Activated CD4-positive, alpha-beta memory T cell treated with anti-CD3 and anti-CD28 coated beads for 36 hours (primary cell): ENCODE measurements at regions of chr10 and their contacts with region 1.

Region 1: DNA sequence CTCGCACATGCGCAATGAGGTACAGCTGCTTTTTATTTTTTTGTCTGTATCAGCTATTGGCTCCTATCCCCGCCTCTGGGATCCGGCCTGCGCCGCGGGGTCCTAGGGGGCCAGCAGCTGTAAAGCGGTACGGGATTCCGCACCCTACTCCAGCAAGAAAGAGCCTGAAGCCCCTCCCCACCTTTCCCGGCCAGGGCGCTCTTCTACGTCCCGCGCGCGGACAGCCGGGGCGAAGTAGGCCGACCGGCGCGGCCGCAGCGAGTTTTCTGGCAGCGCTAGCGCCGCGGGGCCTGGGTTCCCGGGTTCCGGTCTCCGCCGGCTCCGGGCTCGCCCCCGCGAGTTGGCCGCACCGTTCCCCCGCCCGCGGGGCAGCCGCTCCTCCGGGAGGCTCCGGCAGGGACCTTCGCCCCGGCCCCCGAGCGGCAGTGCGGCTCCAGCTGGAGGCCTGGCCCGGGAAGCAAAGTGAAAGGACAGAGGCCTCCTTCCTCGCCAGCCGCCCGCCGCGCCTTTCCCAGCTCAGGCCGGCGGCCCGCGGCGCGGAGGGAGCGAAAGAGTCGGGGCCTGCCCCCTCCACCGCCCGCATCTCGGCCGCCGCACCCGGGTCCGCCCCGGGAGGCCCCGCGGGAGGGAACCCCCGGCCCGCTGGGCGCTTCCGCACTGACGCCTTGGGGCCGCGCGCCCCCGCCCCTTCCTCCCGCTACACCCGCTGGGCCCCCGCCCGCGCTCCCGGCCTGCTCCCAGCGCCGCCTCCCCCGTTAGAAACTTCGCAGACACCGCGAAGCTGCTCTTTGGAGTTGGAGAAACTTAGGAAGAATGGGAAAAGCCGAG is 4.7 kb upstream of the SPAG6 start:
- DNase-seq: peak; percentile 70
- H3K4me3 Mint-ChIP-seq: peak overlapping the region; percentile 83
- H3K27ac Mint-ChIP-seq: peak overlapping the region; percentile 87
- H3K4me1 Mint-ChIP-seq: peaks cover 25% of the 10 kb centered on the region
- H3K27me3 Mint-ChIP-seq: peaks cover 60% of the 10 kb centered on the region

Region 2: GRCh38 chr10:22228943-22229801 is 111.4 kb before region 1 on chr10:
- CTCF ChIA-PET with region 1: no interaction called
- POLR2A ChIA-PET with region 1: interaction called, 10 read pairs
- intact Hi-C with region 1: no loop called
- DNase-seq: peak; percentile 90
- H3K4me3 Mint-ChIP-seq: peak overlapping the region; percentile 77
- H3K27ac Mint-ChIP-seq: peak overlapping the region; percentile 96
- H3K4me1 Mint-ChIP-seq: peaks cover 16% of the 10 kb centered on the region
- H3K27me3 Mint-ChIP-seq: peaks cover 4% of the 10 kb centered on the region

Region 3: DNA sequence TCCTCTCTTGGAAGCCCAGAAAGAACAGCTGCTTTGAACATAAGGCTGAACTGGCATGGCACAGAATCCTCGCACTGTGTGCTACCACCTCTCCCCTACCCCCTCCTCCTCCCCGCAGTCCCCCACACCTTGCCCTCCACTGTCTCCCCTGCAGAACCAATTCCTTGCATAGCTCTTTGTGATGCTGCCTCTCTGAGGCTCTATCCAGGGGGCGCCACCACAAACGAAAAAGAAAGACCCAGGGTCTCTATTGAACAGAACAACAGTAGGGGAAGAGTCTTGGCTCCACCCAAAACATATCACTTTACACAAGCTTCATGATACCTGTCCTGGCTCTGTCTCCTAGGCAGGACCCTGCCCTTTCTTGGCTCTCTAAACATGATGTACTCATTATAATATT is 96.6 kb before region 1 on chr10:
- CTCF ChIA-PET with region 1: no interaction called
- POLR2A ChIA-PET with region 1: no interaction called
- intact Hi-C with region 1: loop called (anchors 1 kb)
- DNase-seq: peak; percentile 17
- H3K4me3 Mint-ChIP-seq: no peak overlapping the region
- H3K27ac Mint-ChIP-seq: no peak overlapping the region
- H3K4me1 Mint-ChIP-seq: peaks cover 39% of the 10 kb centered on the region
- H3K27me3 Mint-ChIP-seq: peaks cover 4% of the 10 kb centered on the region

Region 4: DNA sequence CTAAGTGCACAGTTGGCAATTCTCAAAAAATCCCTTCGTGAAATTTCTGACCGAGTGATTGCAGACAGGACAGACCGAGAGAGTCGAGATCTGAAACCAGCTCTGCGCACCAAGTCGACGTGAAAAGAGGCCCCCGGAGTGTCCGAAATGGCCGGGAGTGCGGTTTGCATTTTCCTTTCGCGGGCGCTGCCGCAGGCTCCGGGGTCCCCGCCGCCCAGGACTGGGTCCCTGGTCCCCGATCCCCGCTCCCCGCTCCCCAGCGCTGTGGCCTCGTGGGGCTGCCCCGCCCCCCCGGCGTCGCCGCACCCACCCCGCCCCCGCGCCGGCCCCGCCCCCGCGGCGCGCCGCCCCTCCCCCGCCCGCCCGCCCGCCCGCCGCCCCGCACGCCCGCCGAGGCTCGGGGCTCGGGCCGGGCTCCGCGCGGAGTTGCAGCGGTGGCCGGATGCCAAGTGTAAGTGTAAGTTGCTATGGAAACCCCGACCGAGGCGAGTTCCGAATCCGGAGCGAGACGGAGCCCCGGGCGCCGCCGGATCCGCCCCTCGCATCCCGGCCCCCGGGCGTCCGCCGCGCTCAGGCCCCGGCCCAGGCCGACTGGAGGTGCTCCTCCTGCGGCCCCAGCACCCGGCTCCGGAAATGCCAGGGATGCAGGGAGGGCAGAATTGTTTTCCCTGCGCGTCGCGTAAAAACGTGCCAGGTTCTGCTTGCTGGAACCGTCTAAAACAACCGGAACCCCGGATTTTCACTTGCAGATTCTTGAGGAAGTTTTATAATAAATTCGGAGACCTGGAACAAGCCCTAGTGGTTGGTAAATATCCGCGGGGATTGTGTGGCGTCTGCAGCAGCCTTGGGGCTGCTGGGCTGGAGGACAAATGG is 15.1 kb before region 1 on chr10:
- CTCF ChIA-PET with region 1: no interaction called
- POLR2A ChIA-PET with region 1: interaction called, 9 read pairs
- intact Hi-C with region 1: loop called (anchors 2 kb)
- DNase-seq: peak; percentile 80
- H3K4me3 Mint-ChIP-seq: peak overlapping the region; percentile 91
- H3K27ac Mint-ChIP-seq: peak overlapping the region; percentile 76
- H3K4me1 Mint-ChIP-seq: peaks cover 37% of the 10 kb centered on the region
- H3K27me3 Mint-ChIP-seq: peaks cover 23% of the 10 kb centered on the region

Region 5: GRCh38 chr10:22379059-22379458 is 38.5 kb after region 1 on chr10:
- CTCF ChIA-PET with region 1: interaction called, 4 read pairs
- POLR2A ChIA-PET with region 1: interaction called, 3 read pairs
- intact Hi-C with region 1: loop called (anchors 2 kb)
- DNase-seq: peak; percentile 70
- H3K4me3 Mint-ChIP-seq: no peak overlapping the region
- H3K27ac Mint-ChIP-seq: peak overlapping the region; percentile 53
- H3K4me1 Mint-ChIP-seq: peaks cover 12% of the 10 kb centered on the region
- H3K27me3 Mint-ChIP-seq: no peaks in the 10 kb centered on the region

Region 6: GRCh38 chr10:22443175-22443901 is 102.8 kb after region 1 on chr10:
- CTCF ChIA-PET with region 1: no interaction called
- POLR2A ChIA-PET with region 1: no interaction called
- intact Hi-C with region 1: no loop called
- DNase-seq: no peak
- H3K4me3 Mint-ChIP-seq: no peak overlapping the region
- H3K27ac Mint-ChIP-seq: no peak overlapping the region
- H3K4me1 Mint-ChIP-seq: peaks cover 18% of the 10 kb centered on the region
- H3K27me3 Mint-ChIP-seq: peaks cover 3% of the 10 kb centered on the region

Region 7: DNA sequence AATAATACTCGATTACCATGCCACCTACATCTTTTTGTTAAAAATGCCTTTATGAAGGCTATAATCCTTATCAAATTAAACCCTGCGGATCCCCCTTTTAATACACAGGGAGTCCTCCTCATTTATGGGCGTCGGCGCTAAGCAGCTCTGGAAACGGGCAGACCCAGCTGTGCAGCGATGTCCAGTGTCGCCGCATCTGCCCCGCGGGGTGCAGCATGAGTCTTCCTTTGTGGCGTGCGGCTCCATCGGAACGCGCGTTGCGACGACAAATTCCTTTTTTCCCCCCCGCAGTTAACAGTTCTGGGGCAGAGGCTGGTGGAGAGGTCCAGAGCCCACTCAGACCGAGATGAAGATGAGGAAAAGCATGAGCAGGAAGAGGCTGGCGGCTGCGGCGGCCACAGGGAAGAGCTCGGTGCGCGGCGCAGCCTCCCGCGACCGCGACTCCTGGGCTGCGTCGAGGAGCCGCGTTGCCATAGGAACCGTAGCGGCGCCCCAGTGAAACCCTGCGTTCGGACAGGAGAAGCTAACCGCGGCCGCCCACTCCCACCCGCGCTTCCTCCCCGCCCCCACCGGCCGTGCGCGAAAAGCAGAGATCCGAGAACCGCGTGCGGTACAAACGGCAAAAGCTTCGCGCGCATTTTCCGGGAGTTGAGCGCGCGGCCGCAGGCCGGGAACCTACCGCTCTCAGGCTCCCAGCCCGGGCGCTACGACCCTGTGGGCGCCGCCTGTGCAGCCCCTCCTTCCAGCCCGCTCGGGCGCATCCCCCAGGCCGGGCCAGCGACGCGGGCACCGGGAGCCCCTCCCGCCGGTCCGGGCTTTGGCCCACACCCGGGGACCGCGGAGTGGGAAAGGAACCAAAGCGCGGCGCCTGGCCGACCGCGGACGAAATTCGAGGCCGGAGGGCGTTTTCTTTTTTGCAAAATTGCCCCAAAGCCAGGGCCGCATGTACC is 135.3 kb after region 1 on chr10:
- CTCF ChIA-PET with region 1: no interaction called
- POLR2A ChIA-PET with region 1: interaction called, 3 read pairs
- intact Hi-C with region 1: loop called (anchors 2 kb)
- DNase-seq: peak; percentile 57
- H3K4me3 Mint-ChIP-seq: peak overlapping the region; percentile 80
- H3K27ac Mint-ChIP-seq: no peak overlapping the region
- H3K4me1 Mint-ChIP-seq: peaks cover 13% of the 10 kb centered on the region
- H3K27me3 Mint-ChIP-seq: peaks cover 55% of the 10 kb centered on the region

Region 8: DNA sequence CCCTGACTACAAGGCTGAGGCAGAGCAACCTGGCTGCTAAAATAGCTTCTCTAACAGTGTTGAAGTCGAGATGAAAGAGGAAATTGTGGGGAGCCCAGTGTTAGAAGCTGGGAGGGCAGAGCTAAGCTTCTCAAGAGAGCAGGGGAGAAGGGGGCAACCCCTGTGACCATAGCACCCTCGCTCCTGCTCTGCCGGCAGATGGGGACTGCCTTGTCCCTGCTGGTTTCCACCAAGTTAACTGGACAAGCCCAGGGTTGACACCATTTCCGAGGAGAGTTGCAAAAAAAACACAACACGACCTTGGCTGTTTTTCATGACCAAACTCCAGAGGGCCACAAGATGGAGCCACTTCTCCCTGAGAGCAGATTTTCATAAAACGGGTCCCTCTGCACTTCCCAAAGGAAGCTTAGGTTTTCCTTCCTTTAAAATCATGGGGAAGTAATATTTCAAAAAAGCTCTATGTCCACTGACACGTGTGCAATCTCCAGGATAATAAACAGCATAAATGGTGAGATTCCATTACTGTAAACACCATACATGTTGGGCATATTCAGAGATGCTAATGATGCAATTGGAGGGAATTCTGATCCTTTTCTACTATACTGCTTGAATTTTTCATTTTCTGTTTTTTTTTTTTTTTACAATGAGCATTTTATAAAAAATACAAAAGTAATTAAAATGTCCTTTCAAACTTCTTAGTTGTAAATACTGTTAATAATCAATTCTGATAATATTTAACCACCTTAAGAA is 233.4 kb after region 1 on chr10:
- CTCF ChIA-PET with region 1: no interaction called
- POLR2A ChIA-PET with region 1: no interaction called
- intact Hi-C with region 1: no loop called
- DNase-seq: peak; percentile 40
- H3K4me3 Mint-ChIP-seq: no peak overlapping the region
- H3K27ac Mint-ChIP-seq: peak overlapping the region; percentile 54
- H3K4me1 Mint-ChIP-seq: peaks cover 56% of the 10 kb centered on the region
- H3K27me3 Mint-ChIP-seq: no peaks in the 10 kb centered on the region